ENCODE measurements at regions of chr16 and their contacts with region 1.

Region 1: DNA sequence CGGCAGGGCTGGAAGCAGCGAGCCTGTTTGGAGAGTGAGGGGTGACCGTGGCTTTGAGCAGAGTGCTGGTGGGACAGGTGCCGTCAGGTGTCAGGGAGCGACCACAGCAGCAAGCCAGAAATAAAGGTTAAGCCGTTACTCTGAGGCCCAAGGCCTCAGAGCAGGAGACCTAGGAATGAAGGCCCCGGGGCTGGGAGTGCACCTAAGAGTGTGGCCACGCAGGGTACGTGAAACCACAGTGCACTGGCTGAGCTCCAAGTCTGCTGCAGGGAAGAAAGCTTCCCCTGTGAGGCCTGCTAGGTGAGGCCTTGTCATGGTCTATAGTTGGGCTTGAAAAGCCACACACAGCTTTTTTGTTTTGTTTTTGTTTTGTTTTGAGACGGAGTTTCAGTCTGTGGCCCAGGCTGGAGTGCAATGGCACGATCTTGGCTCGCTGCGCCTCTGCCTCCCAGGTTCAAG is 8.7 kb downstream of the CLUAP1 start:
- DNase-seq: peak; percentile 93
- H3K4me3 Mint-ChIP-seq: peak overlapping the region; percentile 39
- H3K27ac Mint-ChIP-seq: peak overlapping the region; percentile 76
- H3K4me1 Mint-ChIP-seq: peaks cover 52% of the 10 kb centered on the region
- H3K27me3 Mint-ChIP-seq: no peaks in the 10 kb centered on the region

Region 2: DNA sequence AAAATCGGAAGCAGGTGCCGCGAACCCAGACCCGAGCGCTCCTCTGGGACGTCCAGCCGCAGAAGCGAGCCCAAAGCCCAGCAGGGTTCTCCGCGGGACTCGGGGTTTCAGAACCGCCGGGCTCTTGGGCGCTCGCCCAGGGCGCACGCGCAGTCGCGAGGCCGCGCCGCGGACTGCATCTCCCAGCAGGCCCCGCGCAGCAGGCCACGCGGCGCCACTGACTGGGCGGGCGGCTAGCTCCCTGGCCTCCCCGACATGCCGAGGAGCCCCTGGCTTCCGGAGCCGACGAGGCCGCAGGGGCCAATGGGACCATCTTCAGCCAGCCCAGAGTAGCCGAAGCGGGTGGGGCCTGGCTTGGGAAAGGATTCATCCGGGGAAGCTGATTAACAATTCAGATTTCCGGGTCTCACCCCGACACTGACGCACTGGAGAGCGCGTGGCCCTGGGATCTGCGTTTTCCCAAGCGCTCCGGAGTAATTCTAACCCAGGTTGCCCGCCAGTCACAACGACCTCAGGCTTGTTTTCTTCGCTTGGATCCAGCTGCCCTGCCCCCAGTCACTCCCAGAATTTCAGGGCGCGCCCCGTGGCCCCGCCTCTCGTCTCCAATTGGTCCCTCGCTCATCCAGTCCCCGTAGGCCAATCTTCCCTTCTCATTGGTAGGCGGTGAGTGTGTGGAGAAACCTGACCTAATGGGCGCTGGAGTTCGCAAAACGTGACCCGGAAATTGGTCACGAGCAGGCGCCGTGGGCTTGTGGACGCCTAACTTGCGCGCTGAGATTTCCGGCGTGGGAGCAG is 226.6 kb before region 1 on chr16 and contains the start of gene ZNF263:
- intact Hi-C with region 1: no loop called
- DNase-seq: peak; percentile 98
- H3K4me3 Mint-ChIP-seq: peak within 1 kb of the TSS; percentile 88
- H3K27ac Mint-ChIP-seq: peak within 1 kb of the TSS; percentile 98
- H3K4me1 Mint-ChIP-seq: peaks cover 18% of the 10 kb centered on the region
- H3K27me3 Mint-ChIP-seq: peaks cover 4% of the 10 kb centered on the region
- total RNA-seq, gene ZNF263: 27.0 and 31.3 TPM in 2 replicates

Region 3: DNA sequence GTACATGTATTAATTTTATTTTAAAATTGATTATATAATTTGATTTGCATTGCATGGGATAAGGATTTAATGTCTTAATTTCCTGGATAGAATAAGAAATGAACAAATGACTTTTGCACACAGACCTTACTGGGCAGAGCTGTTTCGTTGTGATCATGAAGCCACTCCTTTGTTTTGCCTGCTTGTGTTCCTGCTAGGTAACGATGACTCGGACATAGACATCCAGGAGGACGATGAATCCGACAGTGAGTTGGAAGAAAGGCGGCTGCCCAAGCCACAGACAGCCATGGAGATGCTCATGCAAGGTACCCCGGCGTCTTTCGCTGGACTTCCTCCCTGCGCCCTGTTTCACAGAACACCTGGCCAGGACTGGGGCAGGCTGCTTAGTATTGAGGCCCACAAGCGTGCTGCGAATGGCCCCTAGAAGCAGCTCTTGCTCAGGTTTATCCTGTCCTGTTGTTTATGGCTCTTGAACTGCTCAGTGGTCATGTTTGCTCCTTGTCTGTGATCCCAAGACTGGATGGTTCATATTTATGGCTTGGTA is 20.9 kb after region 1 on chr16:
- intact Hi-C with region 1: loop called (anchors 1 kb)
- DNase-seq: no peak
- H3K4me3 Mint-ChIP-seq: no peak overlapping the region
- H3K27ac Mint-ChIP-seq: no peak overlapping the region
- H3K4me1 Mint-ChIP-seq: peaks cover 12% of the 10 kb centered on the region
- H3K27me3 Mint-ChIP-seq: no peaks in the 10 kb centered on the region

Region 4: DNA sequence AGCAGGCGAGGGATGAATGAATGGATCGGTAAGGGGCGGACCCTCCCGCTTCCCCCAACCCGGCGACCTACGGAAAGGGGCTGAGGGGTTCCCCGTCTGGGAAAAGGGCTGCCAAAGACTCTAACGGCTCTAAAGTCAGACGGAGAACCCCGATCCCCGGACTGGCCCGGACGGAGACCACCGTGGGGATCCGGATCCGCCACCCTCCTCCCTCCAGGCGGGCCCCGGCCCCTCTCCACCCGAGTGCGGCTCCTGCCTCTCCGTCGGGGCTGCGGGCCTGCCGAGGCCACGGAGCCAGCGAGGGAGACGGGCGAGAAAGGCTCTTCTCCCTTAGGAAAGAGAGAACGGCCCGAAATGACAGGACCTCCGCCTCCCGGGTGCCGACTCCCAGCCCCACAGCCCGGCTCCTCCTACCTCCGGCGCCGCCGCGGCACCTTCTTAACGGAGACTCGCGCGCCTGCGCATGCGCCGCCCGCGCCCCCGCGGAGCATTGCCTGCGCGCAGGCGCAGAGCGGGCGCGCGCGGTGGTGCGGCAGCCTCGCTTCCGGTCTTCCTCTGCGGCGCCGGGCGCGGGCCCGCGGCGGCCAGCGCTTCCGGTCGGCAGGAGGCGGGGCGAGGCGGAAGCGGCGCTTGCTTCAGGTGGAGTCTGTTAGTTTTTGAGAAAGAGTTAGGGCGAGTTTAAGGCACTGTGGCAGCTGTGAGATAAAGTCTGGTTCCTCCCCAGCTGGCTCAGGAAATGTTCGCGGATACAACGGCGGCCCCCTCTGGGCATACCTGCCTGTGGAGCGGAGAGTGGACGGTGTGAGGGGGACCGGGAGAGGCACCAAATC is 101.9 kb after region 1 on chr16 and contains the start of gene SLX4:
- intact Hi-C with region 1: loop called (anchors 10 kb)
- DNase-seq: peak; percentile 99
- H3K4me3 Mint-ChIP-seq: peak within 1 kb of the TSS; percentile 99
- H3K27ac Mint-ChIP-seq: peak within 1 kb of the TSS; percentile 95
- H3K4me1 Mint-ChIP-seq: peaks cover 44% of the 10 kb centered on the region
- H3K27me3 Mint-ChIP-seq: no peaks in the 10 kb centered on the region
- total RNA-seq, gene SLX4: 10.6 and 10.9 TPM in 2 replicates

Region 5: GRCh38 chr16:3780570-3780969 is 271.1 kb after region 1 on chr16:
- intact Hi-C with region 1: no loop called
- DNase-seq: peak; percentile 72
- H3K4me3 Mint-ChIP-seq: no peak overlapping the region
- H3K27ac Mint-ChIP-seq: no peak overlapping the region
- H3K4me1 Mint-ChIP-seq: peaks cover 3% of the 10 kb centered on the region
- H3K27me3 Mint-ChIP-seq: no peaks in the 10 kb centered on the region

Measured in activated CD4-positive, alpha-beta T cell treated with anti-CD3 and anti-CD28 coated beads, Interleukin-2, amount 10 ng/mL, durations not matched to agents 24 days and 14 days (primary cell).